Activated CD4-positive, alpha-beta T cell treated with anti-CD3 and anti-CD28 coated beads for 36 hours (primary cell): ENCODE measurements at regions of chr6 and their contacts with region 1.

Region 1: GRCh38 chr6:112680091-112680490 is 333.0 kb downstream of the RFPL4B start:
- DNase-seq: no peak
- ATAC-seq: no peak
- H3K4me3 Mint-ChIP-seq: no peak overlapping the region
- H3K27ac Mint-ChIP-seq: no peak overlapping the region
- H3K4me1 Mint-ChIP-seq: no peaks in the 10 kb centered on the region
- H3K27me3 Mint-ChIP-seq: no peaks in the 10 kb centered on the region

Region 2: DNA sequence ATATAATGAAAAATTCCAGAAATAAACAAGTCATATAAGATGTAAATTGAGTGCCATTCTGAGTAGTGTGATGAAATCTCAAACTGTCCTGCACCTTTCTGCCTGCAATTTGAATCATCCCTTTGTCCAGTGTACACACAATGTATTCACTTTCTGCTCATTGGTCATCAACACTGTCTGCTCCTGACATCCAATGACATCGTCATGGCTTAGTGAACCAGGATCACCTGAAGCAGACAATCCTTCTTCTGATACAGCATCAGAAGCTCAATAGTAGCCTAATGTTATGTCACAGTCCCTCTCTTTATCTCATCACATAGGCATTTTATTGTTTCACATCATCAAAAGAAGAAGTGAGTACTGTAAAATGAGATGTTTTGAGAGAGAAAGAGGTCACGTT is 33.3 kb after region 1 on chr6:
- CTCF ChIA-PET with region 1: no interaction called
- POLR2A ChIA-PET with region 1: no interaction called
- intact Hi-C with region 1: loop called in 1 of 2 experiments (anchors 1 kb)
- DNase-seq: no peak
- ATAC-seq: no peak
- H3K4me3 Mint-ChIP-seq: no peak overlapping the region
- H3K27ac Mint-ChIP-seq: no peak overlapping the region
- H3K4me1 Mint-ChIP-seq: no peaks in the 10 kb centered on the region
- H3K27me3 Mint-ChIP-seq: no peaks in the 10 kb centered on the region